Heart right ventricle (tissue), 16 donors: ENCODE measurements at regions of chr4 and their contacts with region 1.

Region 1: DNA sequence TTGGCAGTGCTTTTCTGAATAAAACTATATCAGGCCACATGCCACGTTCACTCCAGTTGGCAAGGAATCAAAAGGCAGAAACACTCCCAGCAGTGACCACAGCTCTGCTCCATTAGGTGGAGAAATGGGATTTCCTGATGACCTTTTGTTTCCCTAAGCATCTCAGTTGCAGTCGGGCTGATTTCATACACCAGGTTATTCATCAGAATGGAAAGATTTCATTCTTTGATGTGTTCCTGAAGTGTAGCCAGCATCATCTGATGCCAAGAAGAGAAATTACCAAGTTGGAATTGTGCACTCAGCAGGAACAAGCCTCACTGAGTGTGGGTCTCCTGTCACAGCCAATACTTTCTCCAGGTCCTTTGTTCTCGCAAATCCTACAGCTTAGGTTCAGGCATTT is 193.7 kb downstream of the SPATA18 start:
- DNase-seq: no peak
- ATAC-seq: peak in 7 of 8 donors; percentile 51 to 75 (median 60)
- H3K4me3 ChIP-seq: no peak overlapping the region
- H3K27ac ChIP-seq: no peak overlapping the region
- H3K4me1 ChIP-seq: peaks cover 0 to 46% (median 14%) of the 10 kb centered on the region in 9 donors
- H3K27me3 ChIP-seq: peaks cover 0 to 8% (median 0%) of the 10 kb centered on the region in 7 donors
- CTCF ChIP-seq: no peak

Region 2: DNA sequence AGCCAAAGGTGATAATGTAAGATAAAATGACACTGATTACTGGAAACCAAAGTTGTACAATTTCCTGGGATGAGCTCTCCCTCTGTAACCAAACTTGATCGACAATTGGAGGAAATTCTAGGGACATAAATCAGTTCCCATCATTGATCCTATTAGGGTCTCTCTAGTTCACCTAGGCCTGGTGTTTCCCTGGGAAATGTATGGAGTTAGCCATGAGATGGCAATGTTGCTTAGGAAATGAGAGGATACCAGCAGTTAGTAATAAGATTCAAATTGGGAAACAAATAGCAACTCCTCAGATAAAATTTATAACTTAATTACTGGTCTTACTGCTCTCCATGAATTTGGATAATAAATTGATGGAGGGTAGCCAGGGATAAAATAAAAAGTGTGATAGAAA is 141.5 kb before region 1 on chr4:
- intact Hi-C with region 1: no loop called
- DNase-seq: no peak
- ATAC-seq: peak in 1 of 8 donors; percentile 35
- H3K4me3 ChIP-seq: no peak overlapping the region
- H3K27ac ChIP-seq: no peak overlapping the region
- H3K4me1 ChIP-seq: peaks cover 0 to 12% (median 0%) of the 10 kb centered on the region in 9 donors
- H3K27me3 ChIP-seq: no peaks in the 10 kb centered on the region
- CTCF ChIP-seq: peak in 6 of 9 donors; percentile 14 to 45 (median 34)

Region 3: GRCh38 chr4:52290466-52290865 is 45.6 kb after region 1 on chr4:
- intact Hi-C with region 1: no loop called
- DNase-seq: peak in 1 of 2 donors; percentile 19
- ATAC-seq: no peak
- H3K4me3 ChIP-seq: no peak overlapping the region
- H3K27ac ChIP-seq: no peak overlapping the region
- H3K4me1 ChIP-seq: no peaks in the 10 kb centered on the region
- H3K27me3 ChIP-seq: no peaks in the 10 kb centered on the region
- CTCF ChIP-seq: no peak

Region 4: DNA sequence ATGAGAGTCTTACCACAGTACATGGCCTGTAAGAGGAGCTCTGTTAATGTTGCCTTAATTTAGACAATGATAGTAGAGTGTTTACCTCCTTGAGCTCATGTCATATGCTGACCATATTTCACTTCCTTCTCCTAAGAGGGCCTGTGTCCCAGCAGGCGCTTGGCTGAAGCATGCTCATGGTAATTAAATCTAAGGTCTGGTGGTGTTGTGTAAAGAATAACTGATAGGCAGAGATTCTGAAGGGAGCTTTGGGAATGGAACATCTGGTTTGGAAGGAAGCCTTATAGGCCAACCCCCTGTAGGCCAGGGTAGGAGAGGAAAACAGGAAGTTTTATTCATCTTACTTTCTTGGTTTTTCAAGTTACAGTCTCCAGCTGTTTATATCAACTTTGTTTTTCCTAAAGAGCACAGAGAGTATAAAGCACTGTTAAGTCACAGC is 114.1 kb after region 1 on chr4:
- intact Hi-C with region 1: loop called in 3 of 10 experiments (anchors 10 kb)
- DNase-seq: peak in 1 of 2 donors; percentile 23
- ATAC-seq: peak; percentile 62 to 88 (median 82)
- H3K4me3 ChIP-seq: no peak overlapping the region
- H3K27ac ChIP-seq: peak overlapping the region in 1 of 10 donors; percentile 61
- H3K4me1 ChIP-seq: peaks cover 0 to 6% (median 0%) of the 10 kb centered on the region in 9 donors
- H3K27me3 ChIP-seq: no peaks in the 10 kb centered on the region
- CTCF ChIP-seq: no peak

Region 5: DNA sequence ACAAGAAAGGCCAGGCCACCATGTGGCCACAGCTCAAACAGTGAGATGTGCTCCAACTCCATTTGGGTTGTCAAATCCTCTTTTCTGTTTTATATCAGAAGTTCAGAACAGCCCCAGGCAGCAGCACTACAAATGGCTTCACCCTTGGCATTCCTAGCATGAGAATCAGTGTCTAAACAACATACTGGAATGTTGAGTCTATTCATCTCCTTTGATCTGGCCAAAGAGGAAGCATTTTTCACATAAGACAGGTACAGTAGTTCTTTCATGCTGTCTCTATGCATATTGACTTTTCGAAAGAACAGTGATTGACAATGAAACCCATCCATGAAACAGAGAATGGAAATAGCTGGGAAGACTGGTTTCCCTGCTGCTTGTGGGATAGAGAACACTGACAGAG is 124.8 kb after region 1 on chr4:
- intact Hi-C with region 1: loop called in 1 of 10 experiments (anchors 10 kb)
- DNase-seq: no peak
- ATAC-seq: no peak
- H3K4me3 ChIP-seq: no peak overlapping the region
- H3K27ac ChIP-seq: no peak overlapping the region
- H3K4me1 ChIP-seq: no peaks in the 10 kb centered on the region
- H3K27me3 ChIP-seq: no peaks in the 10 kb centered on the region
- CTCF ChIP-seq: no peak